Right cardiac atrium (tissue), 5 donors: ENCODE measurements at regions of chr1 and their contacts with region 1.

Region 1: DNA sequence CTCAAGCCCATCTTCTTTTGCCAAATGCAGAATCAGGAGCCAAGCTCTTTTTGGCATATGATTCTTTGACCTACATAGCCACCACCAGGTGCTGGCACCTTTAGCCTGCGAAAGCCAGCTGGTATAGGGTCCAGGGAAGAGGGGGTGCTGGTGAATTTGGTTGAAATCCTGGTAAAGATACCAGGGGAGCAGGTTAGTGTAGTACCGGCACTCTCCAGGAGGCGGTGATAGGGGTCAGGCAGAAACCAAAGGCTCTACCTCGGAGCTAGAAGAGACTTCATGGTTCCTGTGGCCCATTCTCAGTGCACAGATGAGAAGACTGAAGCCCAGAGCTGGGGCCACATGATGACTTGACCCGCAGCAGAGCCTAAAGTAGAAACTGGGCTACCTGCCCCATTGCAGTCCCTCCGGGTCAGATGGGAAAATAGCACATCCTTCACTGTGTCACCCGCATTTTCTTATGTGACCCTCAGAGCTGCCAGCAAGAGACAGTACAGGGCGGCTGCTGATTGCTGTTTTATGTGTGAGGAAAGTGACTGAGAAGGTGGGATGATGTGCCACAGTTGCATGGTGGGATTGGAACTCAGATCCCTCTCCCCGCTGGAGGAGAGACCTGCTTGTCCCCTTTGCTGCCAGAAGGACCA is 36.0 kb upstream of the IL19 start:
- DNase-seq: peak; percentile 41 to 82 (median 76)
- ATAC-seq: peak; percentile 30 to 31
- H3K4me3 ChIP-seq: no peak overlapping the region
- H3K27ac ChIP-seq: peak overlapping the region; percentile 18
- H3K4me1 ChIP-seq: peaks cover 25% of the 10 kb centered on the region
- H3K27me3 ChIP-seq: no peaks in the 10 kb centered on the region

Region 2: DNA sequence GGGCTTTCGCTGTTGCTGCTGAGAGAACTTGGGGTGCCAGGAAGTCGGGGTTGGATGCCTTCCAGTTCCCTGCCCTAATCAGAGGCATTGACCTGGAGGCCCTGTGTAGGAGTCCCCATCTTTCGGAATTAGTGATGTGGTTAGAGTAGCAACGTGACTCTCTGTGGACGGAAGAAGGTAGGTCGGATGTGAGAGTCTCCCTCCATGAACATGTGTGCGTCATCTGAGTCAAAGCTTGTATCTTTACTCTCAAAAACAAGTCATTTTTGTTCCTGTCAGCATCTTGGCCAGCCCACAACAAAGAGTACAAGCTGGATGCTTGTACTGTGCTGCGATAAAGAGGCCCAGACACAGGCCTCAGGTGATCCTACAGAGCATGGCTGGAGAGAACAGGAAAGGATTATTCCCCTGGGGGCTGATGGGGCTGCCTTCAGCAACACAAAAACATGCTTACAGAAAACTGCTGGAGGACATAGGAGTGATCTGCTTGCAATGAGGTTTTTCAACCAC is 68.7 kb after region 1 on chr1:
- intact Hi-C with region 1: loop called in 1 of 4 experiments (anchors 5 kb)
- DNase-seq: no peak
- ATAC-seq: peak in 1 of 2 donors; percentile 28
- H3K4me3 ChIP-seq: no peak overlapping the region
- H3K27ac ChIP-seq: no peak overlapping the region
- H3K4me1 ChIP-seq: no peaks in the 10 kb centered on the region
- H3K27me3 ChIP-seq: no peaks in the 10 kb centered on the region